ENCODE measurements at regions of chr6 and their contacts with region 1.

Region 1: GRCh38 chr6:16761471-16762267 is 409 bp upstream of the ATXN1 start:
- DNase-seq: peak; percentile 83 to 90 (median 88)
- H3K4me3 ChIP-seq: peak overlapping the region; percentile 82
- H3K27ac ChIP-seq: peak overlapping the region; percentile 95 to 99
- H3K4me1 ChIP-seq: peaks cover 1% of the 10 kb centered on the region
- H3K27me3 ChIP-seq: no peaks in the 10 kb centered on the region
- CTCF ChIP-seq: peak in 1 of 3 donors; percentile 13
- EP300 ChIP-seq: no peak
- POLR2A ChIP-seq: peak; percentile 36

Region 2: GRCh38 chr6:16319813-16320532 is 441.7 kb before region 1 on chr6:
- intact Hi-C with region 1: loop called in 1 of 4 experiments (anchors 5 kb)
- DNase-seq: peak; percentile 47 to 60 (median 54)
- H3K4me3 ChIP-seq: no peak overlapping the region
- H3K27ac ChIP-seq: peak overlapping the region; percentile 19 to 26
- H3K4me1 ChIP-seq: peaks cover 3% of the 10 kb centered on the region
- H3K27me3 ChIP-seq: no peaks in the 10 kb centered on the region
- CTCF ChIP-seq: no peak
- EP300 ChIP-seq: no peak
- POLR2A ChIP-seq: no peak

Region 3: GRCh38 chr6:16332175-16332542 is 429.5 kb before region 1 on chr6:
- intact Hi-C with region 1: loop called (anchors 5 kb)
- DNase-seq: peak; percentile 63 to 81 (median 78)
- H3K4me3 ChIP-seq: no peak overlapping the region
- H3K27ac ChIP-seq: no peak overlapping the region
- H3K4me1 ChIP-seq: peaks cover 7% of the 10 kb centered on the region
- H3K27me3 ChIP-seq: no peaks in the 10 kb centered on the region
- CTCF ChIP-seq: peak; percentile 77 to 85 (median 80)
- EP300 ChIP-seq: no peak
- POLR2A ChIP-seq: no peak

Region 4: GRCh38 chr6:16338577-16339262 is 422.9 kb before region 1 on chr6:
- intact Hi-C with region 1: loop called in 3 of 4 experiments (anchors 5 kb)
- DNase-seq: peak; percentile 75 to 87 (median 77)
- H3K4me3 ChIP-seq: no peak overlapping the region
- H3K27ac ChIP-seq: no peak overlapping the region
- H3K4me1 ChIP-seq: peaks cover 14% of the 10 kb centered on the region
- H3K27me3 ChIP-seq: no peaks in the 10 kb centered on the region
- CTCF ChIP-seq: peak in 1 of 3 donors; percentile 36
- EP300 ChIP-seq: no peak
- POLR2A ChIP-seq: no peak

Region 5: GRCh38 chr6:16514249-16514648 is 247.4 kb before region 1 on chr6:
- intact Hi-C with region 1: loop called (anchors 2 to 10 kb)
- DNase-seq: peak in 1 of 5 donors; percentile 21
- H3K4me3 ChIP-seq: no peak overlapping the region
- H3K27ac ChIP-seq: no peak overlapping the region
- H3K4me1 ChIP-seq: peaks cover 18% of the 10 kb centered on the region
- H3K27me3 ChIP-seq: no peaks in the 10 kb centered on the region
- CTCF ChIP-seq: peak; percentile 16 to 34 (median 33)
- EP300 ChIP-seq: no peak
- POLR2A ChIP-seq: no peak

Region 6: GRCh38 chr6:16576451-16577368 is 185.0 kb before region 1 on chr6:
- intact Hi-C with region 1: no loop called
- DNase-seq: no peak
- H3K4me3 ChIP-seq: no peak overlapping the region
- H3K27ac ChIP-seq: no peak overlapping the region
- H3K4me1 ChIP-seq: no peaks in the 10 kb centered on the region
- H3K27me3 ChIP-seq: no peaks in the 10 kb centered on the region
- CTCF ChIP-seq: no peak
- EP300 ChIP-seq: no peak
- POLR2A ChIP-seq: no peak

Region 7: GRCh38 chr6:17115251-17116091 is 353.8 kb after region 1 on chr6:
- intact Hi-C with region 1: no loop called
- DNase-seq: no peak
- H3K4me3 ChIP-seq: no peak overlapping the region
- H3K27ac ChIP-seq: no peak overlapping the region
- H3K4me1 ChIP-seq: no peaks in the 10 kb centered on the region
- H3K27me3 ChIP-seq: no peaks in the 10 kb centered on the region
- CTCF ChIP-seq: no peak
- EP300 ChIP-seq: no peak
- POLR2A ChIP-seq: no peak

Measured in ovary (tissue), 10 donors.